CD4-positive, alpha-beta memory T cell (primary cell): ENCODE measurements at regions of chr12 and their contacts with region 1.

Region 1: GRCh38 chr12:96035278-96036236 is at the start of gene LTA4H:
- DNase-seq: peak; percentile 97 to 98 (median 97)
- H3K4me3 ChIP-seq: peak within 1 kb of the TSS; percentile 95 to 98
- H3K4me3 Mint-ChIP-seq: no peak within 1 kb of the TSS
- H3K27ac ChIP-seq: peak within 1 kb of the TSS; percentile 76
- H3K27ac Mint-ChIP-seq: no peak within 1 kb of the TSS
- H3K4me1 ChIP-seq: peaks cover 23% of the 10 kb centered on the region
- H3K4me1 Mint-ChIP-seq: peaks cover 4 to 14% (median 8%) of the 10 kb centered on the region in 4 donors
- H3K27me3 ChIP-seq: no peaks in the 10 kb centered on the region
- H3K27me3 Mint-ChIP-seq: no peaks in the 10 kb centered on the region
- total RNA-seq, gene LTA4H: 57.7 to 58.2 TPM

Region 2: DNA sequence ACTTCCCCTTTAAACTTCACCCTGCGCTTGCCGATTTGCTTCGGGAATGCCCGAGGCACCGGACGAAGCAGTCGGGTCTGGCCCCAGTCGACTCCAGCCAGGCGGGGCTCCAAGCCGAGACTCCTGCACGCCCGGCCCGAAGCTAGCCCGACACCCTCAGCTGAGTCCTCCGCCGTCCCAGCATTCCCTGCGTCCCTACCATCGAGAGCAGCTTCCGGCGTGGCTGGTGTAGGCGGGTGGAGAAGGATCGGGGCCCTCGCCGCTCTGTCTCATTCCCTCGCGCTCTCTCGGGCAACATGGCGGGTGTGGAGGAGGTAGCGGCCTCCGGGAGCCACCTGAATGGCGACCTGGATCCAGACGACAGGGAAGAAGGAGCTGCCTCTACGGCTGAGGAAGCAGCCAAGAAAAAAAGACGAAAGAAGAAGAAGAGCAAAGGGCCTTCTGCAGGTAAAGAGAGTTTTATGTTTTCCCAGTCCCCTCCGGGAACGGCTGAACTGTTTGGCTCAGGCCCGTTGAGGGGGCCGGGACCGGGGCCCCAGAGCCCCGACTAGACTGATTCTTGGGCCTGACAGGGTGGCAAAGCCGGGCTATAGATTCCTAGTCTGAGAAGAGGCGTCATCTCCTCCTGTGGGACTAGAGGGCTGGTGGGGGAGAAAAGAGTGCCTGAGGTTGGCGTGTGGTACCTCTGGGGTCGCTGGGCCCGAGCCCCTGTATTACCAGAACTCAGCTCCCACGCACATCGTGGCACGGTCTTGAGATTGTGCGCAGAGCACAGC is 561.5 kb before region 1 on chr12 and contains the start of gene METAP2:
- CTCF ChIA-PET with region 1: no interaction called
- POLR2A ChIA-PET with region 1: interaction called, 3 read pairs
- intact Hi-C with region 1: loop called (anchors 1 kb)
- DNase-seq: peak; percentile 87 to 92 (median 88)
- H3K4me3 ChIP-seq: peak within 1 kb of the TSS; percentile 83 to 99
- H3K4me3 Mint-ChIP-seq: peak within 1 kb of the TSS; percentile 99 to 100 (median 100)
- H3K27ac ChIP-seq: peak within 1 kb of the TSS; percentile 78
- H3K27ac Mint-ChIP-seq: peak within 1 kb of the TSS; percentile 90 to 100 (median 98)
- H3K4me1 ChIP-seq: peaks cover 50% of the 10 kb centered on the region
- H3K4me1 Mint-ChIP-seq: peaks cover 36 to 64% (median 54%) of the 10 kb centered on the region in 4 donors
- H3K27me3 ChIP-seq: no peaks in the 10 kb centered on the region
- H3K27me3 Mint-ChIP-seq: no peaks in the 10 kb centered on the region
- total RNA-seq, gene METAP2: 50.7 to 52.7 TPM

Region 3: GRCh38 chr12:95858479-95859343 is 176.8 kb before region 1 on chr12 and contains the start of gene SNRPF:
- CTCF ChIA-PET with region 1: no interaction called
- POLR2A ChIA-PET with region 1: interaction called, 3 read pairs
- intact Hi-C with region 1: loop called (anchors 1 kb)
- DNase-seq: peak; percentile 93 to 96 (median 94)
- H3K4me3 ChIP-seq: peak within 1 kb of the TSS; percentile 77 to 90
- H3K4me3 Mint-ChIP-seq: peak within 1 kb of the TSS in 1 of 8 donors; percentile 0
- H3K27ac ChIP-seq: peak within 1 kb of the TSS; percentile 75
- H3K27ac Mint-ChIP-seq: peak within 1 kb of the TSS in 1 of 7 donors; percentile 60
- H3K4me1 ChIP-seq: peaks cover 33% of the 10 kb centered on the region
- H3K4me1 Mint-ChIP-seq: peaks cover 13 to 26% (median 17%) of the 10 kb centered on the region in 4 donors
- H3K27me3 ChIP-seq: no peaks in the 10 kb centered on the region
- H3K27me3 Mint-ChIP-seq: no peaks in the 10 kb centered on the region
- total RNA-seq, gene SNRPF: 16.7 to 19.5 TPM

Region 4: DNA sequence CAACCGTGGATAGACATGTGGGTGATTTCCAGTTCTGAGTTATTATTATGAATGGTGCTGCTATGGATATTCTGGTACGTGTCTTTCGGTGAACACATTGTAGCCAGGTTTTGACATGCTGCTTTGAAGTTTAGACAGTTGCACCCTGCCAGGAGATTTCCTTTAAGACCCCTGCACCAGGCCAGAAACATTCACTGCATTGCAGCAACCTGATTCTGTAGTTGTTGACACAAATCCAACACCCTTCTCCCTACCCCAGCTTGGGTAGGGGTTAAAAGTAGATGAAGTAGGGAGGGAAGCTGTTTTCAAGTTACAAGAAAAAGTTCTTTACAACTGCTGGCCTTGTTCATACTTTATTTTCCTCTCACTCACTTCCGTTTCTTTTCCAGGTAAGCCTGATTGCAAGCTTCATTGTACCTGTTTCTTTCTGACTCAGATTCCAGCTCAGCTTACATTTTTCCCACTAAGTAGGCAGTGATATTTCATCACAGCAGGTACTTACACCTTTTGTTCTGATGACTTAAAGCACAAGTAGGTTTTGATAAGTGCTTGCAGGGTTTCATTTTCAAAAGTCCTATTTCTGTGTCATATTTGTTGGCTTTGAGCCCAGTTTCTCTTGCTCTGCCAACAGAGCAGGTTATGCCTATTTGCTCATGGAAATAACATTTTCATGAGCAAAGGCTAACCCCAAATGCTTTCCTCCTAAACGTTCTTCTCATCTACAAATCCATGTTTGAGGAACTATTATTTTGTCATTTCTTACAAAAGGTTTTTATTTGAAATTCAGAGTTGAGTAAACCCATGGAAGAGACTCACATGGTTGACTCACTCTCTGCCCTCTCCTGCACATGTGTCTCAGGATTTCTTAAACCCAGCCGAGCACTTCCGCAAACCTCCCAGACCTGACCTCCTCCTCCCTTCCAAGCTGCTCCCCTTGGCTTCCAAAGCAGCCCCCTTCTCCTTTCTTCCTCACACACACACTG is 12.0 kb after region 1 on chr12:
- CTCF ChIA-PET with region 1: no interaction called
- POLR2A ChIA-PET with region 1: no interaction called
- intact Hi-C with region 1: loop called (anchors 1 kb)
- DNase-seq: peak in 4 of 5 donors; percentile 36 to 51 (median 38)
- H3K4me3 ChIP-seq: peak overlapping the region in 1 of 2 donors; percentile 15
- H3K4me3 Mint-ChIP-seq: peak overlapping the region; percentile 50 to 84 (median 78)
- H3K27ac ChIP-seq: peak overlapping the region; percentile 37
- H3K27ac Mint-ChIP-seq: peak overlapping the region; percentile 77 to 97 (median 90)
- H3K4me1 ChIP-seq: peaks cover 47% of the 10 kb centered on the region
- H3K4me1 Mint-ChIP-seq: peaks cover 38 to 54% (median 46%) of the 10 kb centered on the region in 4 donors
- H3K27me3 ChIP-seq: no peaks in the 10 kb centered on the region
- H3K27me3 Mint-ChIP-seq: no peaks in the 10 kb centered on the region

Region 5: DNA sequence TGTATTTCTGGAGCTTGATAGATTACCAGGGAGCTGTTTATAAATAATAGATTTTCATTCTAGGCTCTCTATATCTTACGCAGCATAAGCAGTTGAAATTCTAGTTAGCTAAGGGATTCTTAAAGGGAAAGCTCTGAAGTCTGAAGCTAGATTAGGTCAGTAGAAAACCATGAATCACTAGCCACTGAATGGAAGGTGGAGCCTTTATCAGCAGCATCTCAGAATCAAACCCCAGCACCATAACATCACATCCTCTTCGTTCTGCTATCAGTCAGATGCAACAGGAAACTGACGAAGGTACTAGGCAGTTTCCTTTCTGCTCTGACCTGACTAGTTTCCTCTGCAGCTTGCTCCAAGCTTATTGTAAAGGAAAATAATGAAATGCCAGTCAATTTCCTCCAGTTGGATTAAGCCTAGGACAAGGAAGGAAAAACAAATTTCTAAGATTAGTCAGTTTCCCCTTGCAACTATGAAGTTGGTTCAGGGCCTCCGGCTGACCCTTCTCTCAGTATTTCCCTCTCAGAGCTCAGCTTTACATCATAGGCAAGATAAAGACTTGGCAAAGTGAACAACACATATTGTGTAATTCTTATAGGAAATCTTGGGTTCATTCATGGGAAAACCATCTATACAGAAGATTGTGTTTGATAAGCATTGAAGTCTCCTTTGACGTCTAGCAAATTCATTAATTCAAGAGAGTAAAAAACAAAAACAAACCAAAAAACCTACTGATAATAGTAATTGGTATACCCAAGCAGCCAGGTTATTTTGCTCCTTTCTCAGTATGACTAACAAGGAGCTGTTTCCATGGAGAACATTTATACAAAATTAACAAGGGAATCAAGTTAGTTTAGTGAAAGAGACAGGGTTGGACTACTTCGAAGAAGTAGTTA is 410.4 kb after region 1 on chr12:
- CTCF ChIA-PET with region 1: no interaction called
- POLR2A ChIA-PET with region 1: no interaction called
- intact Hi-C with region 1: loop called (anchors 2 kb)
- DNase-seq: peak; percentile 82 to 91 (median 86)
- H3K4me3 ChIP-seq: no peak overlapping the region
- H3K4me3 Mint-ChIP-seq: peak overlapping the region in 7 of 8 donors; percentile 31 to 72 (median 67)
- H3K27ac ChIP-seq: peak overlapping the region; percentile 92
- H3K27ac Mint-ChIP-seq: peak overlapping the region; percentile 93 to 99 (median 98)
- H3K4me1 ChIP-seq: peaks cover 36% of the 10 kb centered on the region
- H3K4me1 Mint-ChIP-seq: peaks cover 27 to 52% (median 36%) of the 10 kb centered on the region in 4 donors
- H3K27me3 ChIP-seq: no peaks in the 10 kb centered on the region
- H3K27me3 Mint-ChIP-seq: no peaks in the 10 kb centered on the region

Region 6: GRCh38 chr12:96906849-96907670 is 871.5 kb after region 1 on chr12 and contains the start of gene NEDD1:
- CTCF ChIA-PET with region 1: no interaction called
- POLR2A ChIA-PET with region 1: no interaction called
- intact Hi-C with region 1: loop called (anchors 1 kb)
- DNase-seq: peak; percentile 81 to 86 (median 82)
- H3K4me3 ChIP-seq: peak within 1 kb of the TSS; percentile 80 to 97
- H3K4me3 Mint-ChIP-seq: peak within 1 kb of the TSS; percentile 93 to 98 (median 96)
- H3K27ac ChIP-seq: peak within 1 kb of the TSS; percentile 96
- H3K27ac Mint-ChIP-seq: peak within 1 kb of the TSS; percentile 94 to 99 (median 99)
- H3K4me1 ChIP-seq: peaks cover 46% of the 10 kb centered on the region
- H3K4me1 Mint-ChIP-seq: peaks cover 37 to 55% (median 44%) of the 10 kb centered on the region in 4 donors
- H3K27me3 ChIP-seq: no peaks in the 10 kb centered on the region
- H3K27me3 Mint-ChIP-seq: peaks cover 0 to 2% of the 10 kb centered on the region in 2 donors
- total RNA-seq, gene NEDD1: 24.6 to 27.9 TPM